Naive thymus-derived CD8-positive, alpha-beta T cell (primary cell): ENCODE measurements at regions of chr13 and their contacts with region 1.

Region 1: DNA sequence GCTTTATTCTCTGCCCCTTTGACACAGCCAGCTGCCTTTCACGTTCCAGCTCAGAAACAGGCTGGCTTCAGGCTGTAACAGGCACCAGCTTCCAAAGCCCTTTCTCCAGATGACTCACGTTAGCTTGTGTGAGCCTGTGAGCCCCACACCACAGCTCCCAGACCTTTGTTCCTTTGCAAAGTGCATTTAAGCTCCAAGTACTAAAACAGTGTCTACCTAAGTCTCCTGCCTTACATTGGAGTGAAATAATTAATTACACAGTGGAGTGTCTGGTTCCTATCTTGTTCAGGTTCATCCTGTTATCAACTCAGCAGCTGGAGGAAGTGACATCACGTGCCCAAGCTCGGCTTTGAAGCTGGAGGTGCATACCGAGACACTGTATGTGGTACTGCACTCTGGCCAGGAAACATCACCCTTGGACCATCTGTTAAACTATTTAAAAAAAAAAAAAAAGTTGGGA is 475.8 kb downstream of the FOXO1 start:
- DNase-seq: peak; percentile 18 to 88 (median 68)
- ATAC-seq: peak; percentile 29 to 47
- H3K4me3 Mint-ChIP-seq: peak overlapping the region; percentile 55 to 84 (median 80)
- H3K27ac Mint-ChIP-seq: peak overlapping the region; percentile 92 to 99 (median 98)
- H3K4me1 Mint-ChIP-seq: peaks cover 53 to 90% (median 82%) of the 10 kb centered on the region in 4 donors
- H3K27me3 Mint-ChIP-seq: peaks cover 0 to 1% (median 0%) of the 10 kb centered on the region in 5 donors

Region 2: GRCh38 chr13:40069173-40070044 is 121.3 kb before region 1 on chr13:
- POLR2A ChIA-PET with region 1: interaction called, 21 read pairs
- DNase-seq: peak; percentile 54 to 84 (median 70)
- ATAC-seq: peak; percentile 95 to 99
- H3K4me3 Mint-ChIP-seq: peak overlapping the region; percentile 34 to 76 (median 62)
- H3K27ac Mint-ChIP-seq: peak overlapping the region; percentile 30 to 85 (median 68)
- H3K4me1 Mint-ChIP-seq: peaks cover 12 to 37% (median 26%) of the 10 kb centered on the region in 4 donors
- H3K27me3 Mint-ChIP-seq: no peaks in the 10 kb centered on the region

Region 3: DNA sequence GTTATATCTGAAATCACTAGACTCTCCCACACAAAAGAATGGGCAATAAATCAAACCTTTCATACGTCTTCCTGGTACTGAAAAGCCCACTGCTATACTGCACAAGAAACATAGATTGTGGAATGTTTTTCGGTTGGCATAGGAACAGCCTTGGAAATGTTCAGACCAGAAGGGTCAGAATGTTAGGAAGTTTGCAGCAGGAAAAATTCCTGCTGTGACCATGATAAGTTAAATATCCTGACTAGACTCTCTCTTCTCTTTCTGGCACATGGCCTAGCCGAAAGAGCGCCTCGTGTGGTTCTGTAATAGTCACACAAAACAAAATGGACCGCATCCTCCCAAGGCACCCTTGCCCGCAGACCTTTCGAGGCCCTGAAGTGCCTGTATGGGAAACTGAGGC is 108.0 kb before region 1 on chr13:
- POLR2A ChIA-PET with region 1: no interaction called
- DNase-seq: no peak
- ATAC-seq: no peak
- H3K4me3 Mint-ChIP-seq: no peak overlapping the region
- H3K27ac Mint-ChIP-seq: no peak overlapping the region
- H3K4me1 Mint-ChIP-seq: peaks cover 4 to 14% (median 11%) of the 10 kb centered on the region in 4 donors
- H3K27me3 Mint-ChIP-seq: no peaks in the 10 kb centered on the region

Region 4: GRCh38 chr13:40175639-40176038 is 15.0 kb before region 1 on chr13:
- POLR2A ChIA-PET with region 1: interaction called, 31 read pairs
- DNase-seq: no peak
- ATAC-seq: no peak
- H3K4me3 Mint-ChIP-seq: no peak overlapping the region
- H3K27ac Mint-ChIP-seq: peak overlapping the region in 2 of 10 donors; percentile 16 to 69
- H3K4me1 Mint-ChIP-seq: peaks cover 20 to 56% (median 40%) of the 10 kb centered on the region in 4 donors
- H3K27me3 Mint-ChIP-seq: no peaks in the 10 kb centered on the region

Region 5: DNA sequence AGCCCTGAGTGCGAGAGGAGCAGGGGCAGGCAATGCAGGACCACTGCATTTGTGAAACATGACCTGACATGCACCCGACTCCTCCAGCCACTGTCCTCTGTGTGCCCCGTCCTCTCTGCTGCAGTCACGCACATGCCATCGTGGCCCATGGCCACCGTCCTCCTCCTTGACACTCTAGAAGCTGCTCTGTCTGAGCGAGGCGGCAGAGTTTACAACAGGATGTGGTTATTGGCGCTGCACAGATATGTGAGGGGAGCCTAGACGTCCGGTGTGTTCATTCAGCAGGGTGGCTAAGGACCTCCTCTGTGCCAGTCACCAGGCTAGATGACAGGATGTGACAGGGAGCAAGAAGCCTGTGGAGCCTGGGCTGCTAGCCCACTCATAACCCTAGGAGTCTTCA is 197.9 kb after region 1 on chr13:
- POLR2A ChIA-PET with region 1: interaction called, 19 read pairs
- DNase-seq: peak in 9 of 10 donors; percentile 36 to 90 (median 82)
- ATAC-seq: peak; percentile 93 to 94
- H3K4me3 Mint-ChIP-seq: peak overlapping the region; percentile 84 to 95 (median 88)
- H3K27ac Mint-ChIP-seq: peak overlapping the region; percentile 96 to 100 (median 99)
- H3K4me1 Mint-ChIP-seq: peaks cover 42 to 73% (median 63%) of the 10 kb centered on the region in 4 donors
- H3K27me3 Mint-ChIP-seq: no peaks in the 10 kb centered on the region

Region 6: DNA sequence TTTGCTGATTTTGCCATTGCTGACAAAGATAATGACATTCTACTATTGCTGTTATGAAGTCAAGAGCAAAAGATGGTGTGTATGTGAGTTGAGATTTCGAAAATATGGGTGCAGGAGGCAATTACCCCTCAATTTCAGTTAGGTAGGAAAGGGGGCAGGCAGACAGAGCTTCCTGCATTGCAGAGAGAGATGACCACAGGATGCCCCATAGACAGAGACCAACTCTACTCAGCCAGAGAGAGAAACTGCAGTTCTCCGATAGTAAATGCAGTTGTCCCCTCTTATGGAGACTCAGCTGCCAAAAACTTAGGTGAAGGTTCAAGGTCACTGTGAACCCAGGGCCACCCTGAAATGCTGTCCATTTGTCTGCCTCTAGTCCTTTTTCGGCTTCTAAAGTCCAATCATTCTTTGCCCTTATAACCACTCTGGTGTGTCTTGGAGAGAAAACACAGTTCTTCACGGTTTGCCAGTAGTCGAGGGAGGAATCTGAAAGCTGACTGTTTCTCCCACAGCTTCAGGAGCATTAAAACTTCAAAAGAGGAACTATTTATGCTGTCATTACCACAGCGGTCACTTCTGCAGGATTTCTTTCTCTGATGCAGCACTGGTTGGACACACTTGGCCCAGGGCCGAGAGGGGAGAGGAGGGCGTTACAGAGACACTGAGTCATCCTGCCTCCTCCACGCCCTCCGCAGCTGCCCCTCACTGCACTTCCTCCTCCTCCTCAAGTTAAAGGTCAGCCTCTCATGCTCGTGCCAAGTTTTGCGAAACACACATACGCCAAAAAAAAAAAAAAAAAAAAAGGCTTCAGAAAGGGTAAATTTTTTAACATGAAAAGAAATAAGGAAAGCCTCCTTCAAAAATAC is 211.5 kb after region 1 on chr13:
- POLR2A ChIA-PET with region 1: no interaction called
- DNase-seq: peak in 2 of 10 donors; percentile 40 to 68
- ATAC-seq: peak in 1 of 2 donors; percentile 67
- H3K4me3 Mint-ChIP-seq: peak overlapping the region; percentile 30 to 71 (median 56)
- H3K27ac Mint-ChIP-seq: peak overlapping the region in 5 of 10 donors; percentile 9 to 54 (median 37)
- H3K4me1 Mint-ChIP-seq: peaks cover 1 to 43% (median 33%) of the 10 kb centered on the region in 4 donors
- H3K27me3 Mint-ChIP-seq: no peaks in the 10 kb centered on the region

Region 7: DNA sequence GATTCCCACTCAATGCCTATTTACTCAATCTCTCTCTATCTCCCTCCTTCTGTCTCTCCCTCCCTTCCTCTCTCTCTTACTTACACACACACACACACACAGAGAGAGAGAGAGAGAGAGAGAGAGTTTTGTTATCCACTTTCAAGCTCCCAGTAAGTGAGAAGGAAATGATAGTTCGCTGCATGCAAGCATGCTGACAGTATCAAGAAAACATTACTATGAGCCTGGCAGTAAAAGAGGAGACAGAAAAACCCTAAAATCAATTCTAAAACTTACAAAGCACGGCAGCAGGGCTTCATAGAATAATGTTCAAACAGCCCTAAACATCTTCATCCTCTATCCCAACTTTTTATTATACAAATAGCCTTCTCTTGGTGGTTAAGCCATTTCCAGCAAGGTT is 303.8 kb after region 1 on chr13:
- POLR2A ChIA-PET with region 1: interaction called, 11 read pairs
- DNase-seq: peak in 1 of 10 donors; percentile 55
- ATAC-seq: peak; percentile 47 to 65
- H3K4me3 Mint-ChIP-seq: peak overlapping the region; percentile 73 to 92 (median 87)
- H3K27ac Mint-ChIP-seq: peak overlapping the region; percentile 92 to 97 (median 96)
- H3K4me1 Mint-ChIP-seq: peaks cover 53 to 90% (median 90%) of the 10 kb centered on the region in 4 donors
- H3K27me3 Mint-ChIP-seq: no peaks in the 10 kb centered on the region